ENCODE measurements at regions of chr12 and their contacts with region 1.

Region 1: GRCh38 chr12:110613771-110614684 is at the start of gene TCTN1:
- DNase-seq: peak; percentile 98
- H3K4me3 ChIP-seq: peak within 1 kb of the TSS; percentile 73
- H3K27ac ChIP-seq: peak within 1 kb of the TSS; percentile 66
- H3K4me1 ChIP-seq: peaks cover under 1% of the 10 kb centered on the region
- H3K27me3 ChIP-seq: no peaks in the 10 kb centered on the region
- CTCF ChIP-seq: no peak
- total RNA-seq, gene TCTN1: 38.8 TPM in 2 replicates

Region 2: DNA sequence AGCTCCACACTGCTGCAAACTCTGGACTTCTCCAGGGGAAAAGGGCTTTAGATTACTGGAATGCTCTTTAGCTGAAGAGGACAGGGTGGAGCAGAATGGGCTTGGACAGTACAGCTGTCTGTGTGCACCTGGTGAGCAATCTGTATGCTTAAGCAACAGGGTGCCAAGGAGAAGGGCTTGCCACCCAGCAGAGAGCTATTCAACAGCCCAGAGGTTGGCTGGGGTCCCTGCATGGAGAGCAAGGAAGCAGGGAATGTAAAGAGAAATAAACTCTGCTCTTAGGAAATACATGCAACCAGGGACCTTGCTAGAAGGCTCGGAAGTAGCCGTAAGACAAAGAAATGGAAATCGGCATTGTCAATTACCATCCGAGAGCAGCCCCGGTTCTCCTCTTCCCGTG is 1829.8 kb before region 1 on chr12:
- CTCF ChIA-PET with region 1: no interaction called
- POLR2A ChIA-PET with region 1: no interaction called
- intact Hi-C with region 1: no loop called
- DNase-seq: no peak
- H3K4me3 ChIP-seq: no peak overlapping the region
- H3K27ac ChIP-seq: no peak overlapping the region
- H3K4me1 ChIP-seq: peaks cover 8% of the 10 kb centered on the region
- H3K27me3 ChIP-seq: no peaks in the 10 kb centered on the region
- CTCF ChIP-seq: no peak

Region 3: GRCh38 chr12:109880016-109880931 is 733.8 kb before region 1 on chr12 and contains the start of gene GLTP:
- CTCF ChIA-PET with region 1: no interaction called
- POLR2A ChIA-PET with region 1: no interaction called
- intact Hi-C with region 1: no loop called
- DNase-seq: peak; percentile 91
- H3K4me3 ChIP-seq: peak within 1 kb of the TSS; percentile 65
- H3K27ac ChIP-seq: peak within 1 kb of the TSS; percentile 37
- H3K4me1 ChIP-seq: peaks cover 5% of the 10 kb centered on the region
- H3K27me3 ChIP-seq: peaks cover 4% of the 10 kb centered on the region
- CTCF ChIP-seq: no peak; the same call in 1 of the 2 replicates
- total RNA-seq, gene GLTP: 20.2 and 20.7 TPM in 2 replicates

Region 4: DNA sequence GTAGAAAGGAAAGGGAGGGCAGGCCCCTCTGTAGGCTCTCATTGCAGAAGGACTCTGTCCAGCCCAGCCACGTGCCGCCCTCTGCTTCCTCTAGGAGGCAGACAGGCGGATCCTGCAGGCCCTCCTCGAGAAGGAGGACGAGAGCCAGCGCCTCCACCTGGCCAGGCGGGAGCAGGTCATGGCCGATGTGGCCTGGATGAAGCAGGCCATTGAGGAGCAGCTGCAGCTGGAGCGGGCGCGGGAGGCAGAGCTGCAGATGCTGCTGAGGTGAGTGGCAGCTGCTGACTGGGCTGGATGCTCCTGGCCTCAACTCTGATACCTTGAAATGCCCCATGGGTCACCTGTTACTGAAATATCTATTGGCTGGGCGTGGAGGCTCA is 703.1 kb before region 1 on chr12:
- CTCF ChIA-PET with region 1: no interaction called
- POLR2A ChIA-PET with region 1: no interaction called
- intact Hi-C with region 1: no loop called
- DNase-seq: peak; percentile 45
- H3K4me3 ChIP-seq: no peak overlapping the region
- H3K27ac ChIP-seq: no peak overlapping the region
- H3K4me1 ChIP-seq: no peaks in the 10 kb centered on the region
- H3K27me3 ChIP-seq: no peaks in the 10 kb centered on the region
- CTCF ChIP-seq: peak; percentile 42; the same call in 1 of the 2 replicates

Region 5: DNA sequence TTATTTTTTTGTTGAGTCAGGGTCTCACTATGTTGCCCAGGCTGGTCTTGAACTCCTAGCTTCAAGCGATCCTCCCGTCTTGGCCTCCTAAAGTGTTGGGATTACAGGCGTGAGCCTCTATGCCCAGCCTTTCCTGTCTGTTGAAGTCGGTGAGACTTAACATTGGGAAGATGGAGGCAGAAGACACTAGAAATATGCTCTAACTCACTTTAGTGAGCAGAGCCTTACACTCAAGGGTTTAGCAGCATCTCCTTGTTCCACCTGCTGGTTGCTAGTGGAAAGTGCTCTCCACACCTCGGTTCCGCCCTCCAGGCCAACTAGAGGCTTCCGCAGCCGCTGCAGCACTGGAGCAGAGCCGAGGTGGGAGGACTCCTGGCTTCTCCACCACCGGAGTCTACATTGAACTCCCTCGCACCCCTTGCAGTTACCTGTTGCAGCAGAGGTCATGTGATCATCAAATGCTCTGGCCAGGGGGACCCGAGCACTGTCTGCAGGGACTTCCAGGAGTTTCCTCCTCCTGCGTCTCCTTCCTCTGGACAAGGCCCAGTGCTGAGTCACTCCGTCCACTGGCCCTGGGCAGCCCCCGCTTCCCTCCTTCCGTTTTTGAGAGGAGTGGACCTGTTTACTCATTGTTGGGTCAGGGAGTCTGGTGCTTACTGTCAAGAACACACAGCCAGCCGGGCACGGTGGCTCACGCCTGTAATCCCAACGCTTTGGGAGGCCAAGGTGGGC is 84.3 kb after region 1 on chr12:
- CTCF ChIA-PET with region 1: interaction called, 4 read pairs
- POLR2A ChIA-PET with region 1: no interaction called
- intact Hi-C with region 1: loop called (anchors 10 kb)
- DNase-seq: peak; percentile 87
- H3K4me3 ChIP-seq: no peak overlapping the region
- H3K27ac ChIP-seq: no peak overlapping the region
- H3K4me1 ChIP-seq: peaks cover 7% of the 10 kb centered on the region
- H3K27me3 ChIP-seq: no peaks in the 10 kb centered on the region
- CTCF ChIP-seq: peak; percentile 68